ENCODE measurements at regions of chr19 and their contacts with region 1.

Region 1: DNA sequence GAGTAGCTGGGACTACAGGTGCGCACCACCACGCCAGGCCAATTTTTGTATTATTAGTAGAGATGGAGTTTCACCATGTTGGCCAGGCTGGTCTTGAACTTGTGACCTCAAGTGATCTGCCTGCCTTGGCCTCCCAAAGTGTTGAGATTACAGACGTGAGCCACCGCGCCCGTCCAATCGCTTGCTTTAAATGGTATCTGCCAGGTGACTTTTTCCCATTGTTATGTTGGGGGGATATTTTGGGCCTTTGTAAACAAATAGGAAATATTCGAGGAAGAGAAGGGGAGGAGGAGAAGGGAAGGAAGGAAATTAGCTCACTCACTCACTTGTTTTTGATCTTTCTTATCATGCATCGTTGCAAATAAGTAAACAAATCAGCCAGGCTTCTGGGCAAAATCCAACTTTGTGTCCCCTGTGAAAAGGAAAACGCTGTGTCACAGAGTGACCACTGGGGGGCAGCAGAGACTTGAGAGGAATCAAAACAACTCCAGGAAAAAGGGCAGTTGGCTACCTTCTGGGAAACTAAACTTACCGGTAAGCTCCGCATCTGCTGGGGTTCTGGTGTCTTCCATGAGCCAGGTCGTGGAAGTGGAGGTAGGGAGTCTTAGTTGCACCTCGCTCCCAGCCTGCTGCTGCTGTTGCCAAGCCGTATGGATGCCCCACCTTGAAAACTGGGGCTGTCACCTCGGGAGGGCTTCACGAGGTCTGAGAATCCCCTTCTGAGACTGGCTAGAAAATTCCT is 9.3 kb upstream of the RANBP3 start:
- DNase-seq: peak; percentile 49 to 64
- ATAC-seq: peak; percentile 77 to 85
- H3K4me3 ChIP-seq: peak overlapping the region; percentile 31 to 48 (median 44)
- H3K27ac ChIP-seq: no peak overlapping the region
- H3K4me1 ChIP-seq: peaks cover 3 to 8% of the 10 kb centered on the region in 2 donors
- H3K27me3 ChIP-seq: no peaks in the 10 kb centered on the region
- CTCF ChIP-seq: peak; percentile 72 to 98 (median 87)
- POLR2A ChIP-seq: no peak

Region 2: DNA sequence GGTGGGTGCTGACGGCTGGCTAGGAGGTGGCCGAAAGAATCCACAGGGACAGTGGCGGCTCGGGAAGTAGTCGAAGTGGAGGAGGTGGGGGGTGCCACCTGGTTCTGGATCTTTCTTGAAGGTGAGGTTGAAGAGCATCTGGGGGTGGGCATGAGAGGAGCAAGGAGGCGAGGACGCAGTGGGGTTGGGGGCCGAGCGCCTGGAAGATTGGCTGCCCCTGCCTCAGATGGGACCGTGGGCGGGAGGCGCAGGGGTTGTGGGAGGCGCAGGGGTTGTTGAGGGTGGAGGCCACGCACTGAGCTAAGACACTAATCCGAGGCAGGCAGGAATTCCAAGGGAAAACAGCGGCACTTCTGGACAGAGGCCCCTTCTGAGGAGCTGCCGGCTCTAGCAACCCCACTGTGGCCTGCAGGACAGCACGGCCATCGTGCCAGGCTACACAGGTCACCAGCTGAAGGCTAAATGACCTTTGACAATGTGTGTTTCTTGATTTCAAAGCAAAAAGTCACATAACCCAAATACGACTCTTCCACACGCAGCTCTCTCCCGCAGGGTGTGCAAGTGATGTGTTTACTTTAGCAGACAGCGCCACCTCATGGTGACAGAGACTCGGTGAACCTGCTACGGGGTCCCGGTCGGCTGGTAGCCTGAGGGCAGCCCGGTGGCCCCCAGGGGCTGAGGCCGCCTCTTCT is 34.8 kb after region 1 on chr19:
- in situ Hi-C with region 1: loop called in 1 of 4 experiments (anchors 5 kb)
- intact Hi-C with region 1: loop called (anchors 1 kb)
- DNase-seq: peak; percentile 32 to 39
- ATAC-seq: peak; percentile 82 to 83
- H3K4me3 ChIP-seq: no peak overlapping the region
- H3K27ac ChIP-seq: peak overlapping the region in 2 of 4 donors; percentile 39 to 52
- H3K4me1 ChIP-seq: no peaks in the 10 kb centered on the region
- H3K27me3 ChIP-seq: no peaks in the 10 kb centered on the region
- CTCF ChIP-seq: peak; percentile 50 to 78 (median 74)
- POLR2A ChIP-seq: no peak

Region 3: GRCh38 chr19:6125571-6125989 is 138.3 kb after region 1 on chr19:
- in situ Hi-C with region 1: no loop called
- intact Hi-C with region 1: loop called (anchors 5 kb)
- DNase-seq: peak; percentile 16 to 53
- ATAC-seq: peak; percentile 68 to 78
- H3K4me3 ChIP-seq: no peak overlapping the region
- H3K27ac ChIP-seq: no peak overlapping the region
- H3K4me1 ChIP-seq: no peaks in the 10 kb centered on the region
- H3K27me3 ChIP-seq: no peaks in the 10 kb centered on the region
- CTCF ChIP-seq: peak; percentile 82 to 93 (median 89)
- POLR2A ChIP-seq: no peak

Measured in gastrocnemius medialis (tissue), 4 donors.